H1 (cell line): ENCODE measurements at regions of chr15 and their contacts with region 1.

Region 1: GRCh38 chr15:90261811-90262210 is 3.7 kb upstream of the NGRN start:
- DNase-seq: no peak
- H3K4me3 ChIP-seq: no peak overlapping the region
- H3K27ac ChIP-seq: no peak overlapping the region
- H3K4me1 ChIP-seq: peaks cover 0 to 7% (median 3%) of the 10 kb centered on the region in 4 experiments; a peak in 5 of 7 replicates
- H3K27me3 ChIP-seq: no peaks in the 10 kb centered on the region
- CTCF ChIP-seq: no peak
- EP300 ChIP-seq: no peak
- POLR2A ChIP-seq: no peak
- RAD21 ChIP-seq: no peak

Region 2: GRCh38 chr15:90159213-90159612 is 102.6 kb before region 1 on chr15:
- CTCF ChIA-PET with region 1: no interaction called
- POLR2A ChIA-PET with region 1: no interaction called
- DNase-seq: no peak
- H3K4me3 ChIP-seq: no peak overlapping the region
- H3K27ac ChIP-seq: no peak overlapping the region
- H3K4me1 ChIP-seq: peaks cover 0 to 17% (median 7%) of the 10 kb centered on the region in 4 experiments; a peak in 4 of 7 replicates
- H3K27me3 ChIP-seq: no peaks in the 10 kb centered on the region
- CTCF ChIP-seq: no peak
- EP300 ChIP-seq: no peak
- POLR2A ChIP-seq: no peak
- RAD21 ChIP-seq: no peak

Region 3: DNA sequence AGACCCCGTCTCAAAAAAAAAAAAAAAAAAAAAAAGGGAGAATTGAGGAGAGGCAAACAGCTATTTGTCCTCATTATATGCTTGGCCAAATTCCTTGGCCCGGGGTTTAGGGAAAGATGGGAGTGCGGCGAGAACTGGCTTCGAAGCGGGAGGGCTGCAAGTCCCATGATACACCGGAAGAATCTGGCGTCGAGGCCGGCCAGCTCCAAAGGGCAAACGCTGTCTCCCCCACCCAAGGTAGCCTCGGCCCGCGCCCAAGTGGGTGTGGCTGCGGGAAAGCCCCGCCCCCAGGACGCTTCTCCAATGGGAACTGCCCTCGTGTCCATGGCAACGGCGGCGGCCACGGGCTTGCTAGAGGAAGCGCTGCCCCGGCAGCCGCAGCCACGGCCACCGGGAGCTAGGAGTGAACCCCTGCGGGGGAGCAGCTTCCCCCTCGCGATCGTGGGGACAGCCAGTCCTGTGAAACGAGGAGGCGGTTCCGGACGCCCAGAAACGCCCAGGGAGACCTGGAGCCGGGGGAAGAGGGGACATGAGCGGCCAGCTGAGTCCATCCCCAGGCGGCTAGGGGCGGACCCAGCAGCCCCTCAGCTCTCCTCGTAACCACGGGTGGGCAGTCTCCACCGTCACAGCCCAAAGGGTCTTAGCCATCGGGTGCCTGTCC is 12.5 kb before region 1 on chr15 and contains the start of gene TTLL13:
- CTCF ChIA-PET with region 1: interaction called, 10 read pairs
- POLR2A ChIA-PET with region 1: interaction called, 7 read pairs
- DNase-seq: peak; percentile 67 to 100
- H3K4me3 ChIP-seq: peak within 1 kb of the TSS; percentile 64 to 75 (median 66)
- H3K27ac ChIP-seq: no peak within 1 kb of the TSS
- H3K4me1 ChIP-seq: peaks cover 0 to 4% (median 0%) of the 10 kb centered on the region in 4 experiments; a peak in 2 of 7 replicates
- H3K27me3 ChIP-seq: peaks cover 0 to 3% (median 1%) of the 10 kb centered on the region in 4 experiments; a peak in 1 of 7 replicates
- CTCF ChIP-seq: no peak
- EP300 ChIP-seq: no peak
- POLR2A ChIP-seq: no peak
- RAD21 ChIP-seq: no peak
- total RNA-seq, gene TTLL13: 0.19 TPM in 1 of 2 replicates, not detected in the other